ENCODE measurements at regions of chr4 and their contacts with region 1.

Region 1: GRCh38 chr4:89164400-89164799 is 53.1 kb downstream of the TIGD2 start:
- DNase-seq: no peak
- H3K4me3 ChIP-seq: no peak overlapping the region
- H3K27ac ChIP-seq: no peak overlapping the region
- H3K4me1 ChIP-seq: no peaks in the 10 kb centered on the region
- H3K27me3 ChIP-seq: no peaks in the 10 kb centered on the region
- CTCF ChIP-seq: no peak

Region 2: DNA sequence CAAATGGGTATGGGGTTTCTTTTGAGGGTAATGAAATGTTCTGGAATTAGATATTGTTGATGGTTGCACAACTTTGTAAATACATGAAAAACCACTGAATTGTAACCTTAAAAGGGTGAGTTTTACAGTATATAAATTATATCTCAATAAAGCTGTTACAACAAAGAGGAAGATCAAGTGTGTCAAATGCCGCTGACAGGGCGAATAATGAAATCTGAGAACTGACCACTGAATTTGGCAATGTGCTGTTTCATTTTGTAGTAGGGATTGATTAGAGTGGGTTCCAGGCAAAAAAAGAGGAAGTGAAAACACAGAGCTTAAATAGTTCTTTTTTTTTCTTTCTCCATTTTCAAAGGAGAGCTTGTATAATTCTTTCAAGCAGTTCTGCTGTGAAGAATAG is 305.6 kb before region 1 on chr4:
- intact Hi-C with region 1: no loop called
- DNase-seq: no peak
- H3K4me3 ChIP-seq: no peak overlapping the region
- H3K27ac ChIP-seq: no peak overlapping the region
- H3K4me1 ChIP-seq: no peaks in the 10 kb centered on the region
- H3K27me3 ChIP-seq: no peaks in the 10 kb centered on the region
- CTCF ChIP-seq: no peak

Region 3: DNA sequence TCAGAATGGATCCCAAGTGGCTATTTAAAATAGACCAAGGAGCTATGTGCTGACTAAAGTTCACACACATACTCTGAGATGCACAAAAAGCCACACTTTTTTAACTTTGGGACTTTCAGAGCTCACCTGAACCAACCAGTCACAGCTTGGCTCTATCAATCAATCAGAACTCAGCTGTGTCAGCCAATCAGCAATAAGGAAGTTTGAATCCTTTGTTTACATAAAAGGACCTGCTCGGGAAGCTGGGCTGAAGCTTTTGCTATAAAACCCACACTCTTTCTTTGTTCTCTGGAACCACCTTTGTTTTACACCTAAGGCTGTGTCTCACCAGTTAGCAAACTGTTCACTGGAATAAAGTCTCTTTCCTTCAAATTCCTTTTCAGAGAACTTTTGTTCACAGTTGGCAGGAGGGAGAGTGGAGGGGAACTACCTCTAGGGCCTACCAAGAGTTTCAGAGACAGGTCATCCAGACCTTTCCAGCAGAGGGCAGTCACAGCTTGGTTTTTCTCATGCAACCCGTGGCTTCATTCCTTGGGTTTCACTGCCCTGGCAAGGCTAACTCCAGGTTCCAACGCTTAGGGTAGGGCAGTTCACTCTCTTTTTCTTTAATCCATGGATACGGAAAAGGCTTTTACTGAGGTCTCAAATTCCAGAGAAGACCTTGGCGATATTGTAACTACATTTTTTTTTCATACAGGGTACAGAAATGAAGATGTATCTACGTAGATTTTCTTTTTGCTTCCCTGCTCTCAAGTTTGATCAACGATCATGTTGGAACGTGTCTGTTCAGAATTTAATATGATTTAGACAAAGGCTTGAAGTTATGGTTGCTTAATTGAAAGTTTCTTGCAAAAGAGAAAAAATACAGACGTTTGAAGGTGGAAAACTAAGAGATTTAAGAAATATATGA is 62.5 kb after region 1 on chr4:
- intact Hi-C with region 1: loop called (anchors 10 kb)
- DNase-seq: peak; percentile 94
- H3K4me3 ChIP-seq: no peak overlapping the region
- H3K27ac ChIP-seq: peak overlapping the region; percentile 14
- H3K4me1 ChIP-seq: no peaks in the 10 kb centered on the region
- H3K27me3 ChIP-seq: no peaks in the 10 kb centered on the region
- CTCF ChIP-seq: peak; percentile 68